Left colon (tissue), 2 donors: ENCODE measurements at regions of chr12 and their contacts with region 1.

Region 1: GRCh38 chr12:52506858-52507715 is 13.1 kb downstream of the KRT5 start:
- DNase-seq: no peak
- ATAC-seq: peak; percentile 48

Region 2: GRCh38 chr12:52295663-52296062 is 211.4 kb before region 1 on chr12:
- intact Hi-C with region 1: no loop called
- DNase-seq: no peak
- ATAC-seq: no peak

Region 3: GRCh38 chr12:52372216-52373154 is 134.6 kb before region 1 on chr12:
- intact Hi-C with region 1: loop called in 1 of 2 experiments (anchors 10 kb)
- DNase-seq: peak; percentile 65 to 85
- ATAC-seq: peak; percentile 92

Region 4: DNA sequence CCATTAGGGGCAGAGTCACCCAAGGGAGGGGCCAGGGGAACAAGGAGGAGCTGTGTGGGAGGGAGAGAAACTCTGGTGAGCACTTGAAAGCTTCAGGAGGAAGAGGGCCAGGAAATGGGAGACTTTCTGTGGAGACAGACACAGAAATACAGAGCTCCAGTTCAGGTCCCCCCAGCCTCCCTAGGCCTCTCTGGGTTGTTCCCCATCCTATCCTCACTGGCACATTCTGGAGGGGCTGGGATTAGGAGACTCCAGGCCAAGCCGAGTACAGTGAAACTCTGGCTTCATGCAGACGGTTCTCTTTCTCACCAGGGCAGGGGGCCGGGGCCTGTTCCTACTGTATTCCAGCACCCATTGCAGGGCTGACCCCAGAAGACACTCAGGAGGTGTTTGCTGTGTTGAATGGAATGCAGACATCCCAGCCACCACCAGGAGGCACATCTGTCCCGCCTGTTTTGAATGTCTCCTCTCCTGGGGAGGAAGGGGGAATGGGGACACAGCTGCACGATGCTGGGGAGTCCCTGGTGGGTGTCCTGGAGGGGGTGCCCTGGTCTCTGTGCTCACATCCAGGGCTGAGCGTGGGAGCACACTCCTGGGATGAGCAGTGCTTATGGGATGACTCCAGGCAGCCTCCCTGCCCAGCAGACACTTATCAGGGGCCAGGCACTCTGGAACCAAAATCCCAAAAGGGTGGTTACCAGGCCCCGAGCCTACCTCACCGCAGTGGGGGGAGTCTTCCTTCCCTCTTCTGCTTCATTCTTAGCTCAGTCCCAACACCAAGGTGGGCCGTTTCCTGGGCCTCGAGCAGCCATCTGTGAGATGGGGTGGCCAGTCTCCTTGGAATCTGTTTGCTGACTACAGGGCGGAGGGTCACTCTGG is 116.1 kb before region 1 on chr12:
- intact Hi-C with region 1: loop called in 1 of 2 experiments (anchors 5 kb)
- DNase-seq: peak in 1 of 2 donors; percentile 22
- ATAC-seq: peak; percentile 58